Mammary epithelial cell (primary cell): ENCODE measurements at regions of chr19 and their contacts with region 1.

Region 1: DNA sequence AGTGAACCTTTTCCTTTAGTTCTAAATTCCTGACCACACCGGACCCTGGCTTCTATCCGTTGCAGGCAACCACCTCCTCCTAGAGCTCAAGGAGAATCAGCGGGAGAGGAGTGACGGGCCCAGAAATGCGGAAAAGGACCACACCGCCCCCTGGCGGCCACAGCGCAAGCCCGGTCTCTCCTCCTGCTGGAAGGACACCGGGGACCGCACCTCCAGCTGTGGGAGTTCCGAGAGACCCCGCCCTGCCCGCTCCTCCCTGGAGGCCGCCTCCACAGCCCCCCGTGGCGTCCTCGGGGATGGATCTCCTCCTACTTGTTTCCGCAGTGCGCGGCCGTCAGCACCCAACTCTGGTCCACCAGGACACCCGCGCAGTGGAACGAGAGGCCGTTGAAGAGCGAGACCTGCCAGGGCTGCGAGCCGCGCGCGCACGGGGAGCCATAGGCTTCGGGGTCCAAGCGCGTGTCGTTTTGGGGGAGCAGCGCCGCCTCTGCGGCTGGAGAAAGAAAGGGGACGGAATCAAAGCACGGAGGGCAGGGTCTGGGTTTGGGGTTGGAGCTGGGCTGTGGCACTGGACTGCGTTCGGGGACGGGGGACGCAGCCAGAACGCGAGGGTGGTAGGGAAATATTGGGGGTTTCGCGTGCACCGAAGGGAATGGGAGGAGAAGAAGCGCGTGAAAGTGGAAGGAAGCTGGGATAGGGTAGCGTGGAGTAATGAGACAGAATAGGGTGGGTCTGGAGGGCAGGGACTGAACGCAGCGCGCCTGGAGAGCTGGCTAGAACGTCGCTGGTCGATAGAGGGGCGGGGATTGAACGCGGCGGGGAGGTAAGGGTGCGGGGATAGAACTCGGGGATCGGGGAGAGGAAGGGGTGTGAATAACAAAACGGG is 2.5 kb downstream of the KLK10 start:
- DNase-seq: peak; percentile 87
- H3K4me3 ChIP-seq: peak overlapping the region; percentile 56 to 74 (median 70)
- H3K27ac ChIP-seq: peak overlapping the region; percentile 77
- H3K4me1 ChIP-seq: peaks cover 26% of the 10 kb centered on the region
- H3K27me3 ChIP-seq: no peaks in the 10 kb centered on the region
- CTCF ChIP-seq: peak; percentile 93 to 99

Region 2: GRCh38 chr19:50724522-50725217 is 292.4 kb before region 1 on chr19:
- CTCF ChIA-PET with region 1: interaction called, 12 read pairs
- dilution Hi-C with region 1: no loop called
- in situ Hi-C with region 1: no loop called
- intact Hi-C with region 1: no loop called
- DNase-seq: peak; percentile 99
- H3K4me3 ChIP-seq: peak overlapping the region; percentile 66 to 82 (median 66)
- H3K27ac ChIP-seq: peak overlapping the region; percentile 39
- H3K4me1 ChIP-seq: peaks cover 25% of the 10 kb centered on the region
- H3K27me3 ChIP-seq: no peaks in the 10 kb centered on the region
- CTCF ChIP-seq: peak; percentile 40 to 64

Region 3: GRCh38 chr19:50882183-50882582 is 134.9 kb before region 1 on chr19:
- CTCF ChIA-PET with region 1: no interaction called
- dilution Hi-C with region 1: no loop called
- in situ Hi-C with region 1: no loop called
- intact Hi-C with region 1: no loop called
- DNase-seq: no peak
- H3K4me3 ChIP-seq: no peak overlapping the region
- H3K27ac ChIP-seq: no peak overlapping the region
- H3K4me1 ChIP-seq: no peaks in the 10 kb centered on the region
- H3K27me3 ChIP-seq: peaks cover 5% of the 10 kb centered on the region
- CTCF ChIP-seq: no peak

Region 4: GRCh38 chr19:50896591-50897190 is 120.3 kb before region 1 on chr19:
- CTCF ChIA-PET with region 1: interaction called, 4 read pairs
- dilution Hi-C with region 1: no loop called
- in situ Hi-C with region 1: no loop called
- intact Hi-C with region 1: loop called (anchors 2 kb)
- DNase-seq: peak; percentile 98
- H3K4me3 ChIP-seq: no peak overlapping the region
- H3K27ac ChIP-seq: peak overlapping the region; percentile 55
- H3K4me1 ChIP-seq: peaks cover 18% of the 10 kb centered on the region
- H3K27me3 ChIP-seq: peaks cover 2% of the 10 kb centered on the region
- CTCF ChIP-seq: no peak

Region 5: GRCh38 chr19:50933640-50934039 is 83.4 kb before region 1 on chr19:
- CTCF ChIA-PET with region 1: interaction called, 16 read pairs
- dilution Hi-C with region 1: loop called (anchors 5 kb)
- in situ Hi-C with region 1: loop called (anchors 5 kb)
- intact Hi-C with region 1: loop called (anchors 1 kb)
- DNase-seq: peak; percentile 93
- H3K4me3 ChIP-seq: no peak overlapping the region
- H3K27ac ChIP-seq: peak overlapping the region; percentile 97
- H3K4me1 ChIP-seq: peaks cover 33% of the 10 kb centered on the region
- H3K27me3 ChIP-seq: no peaks in the 10 kb centered on the region
- CTCF ChIP-seq: no peak

Region 6: GRCh38 chr19:50969411-50969756 is 47.7 kb before region 1 on chr19 and contains the start of gene KLK6:
- CTCF ChIA-PET with region 1: no interaction called
- dilution Hi-C with region 1: no loop called
- in situ Hi-C with region 1: no loop called
- intact Hi-C with region 1: loop called (anchors 1 kb)
- DNase-seq: peak; percentile 95
- H3K4me3 ChIP-seq: no peak within 1 kb of the TSS
- H3K27ac ChIP-seq: peak within 1 kb of the TSS; percentile 83
- H3K4me1 ChIP-seq: peaks cover 25% of the 10 kb centered on the region
- H3K27me3 ChIP-seq: no peaks in the 10 kb centered on the region
- CTCF ChIP-seq: no peak
- total RNA-seq, gene KLK6: 12.7 to 175 TPM

Region 7: GRCh38 chr19:51047031-51047335 is 29.9 kb after region 1 on chr19:
- CTCF ChIA-PET with region 1: interaction called, 10 read pairs
- dilution Hi-C with region 1: no loop called
- in situ Hi-C with region 1: no loop called
- intact Hi-C with region 1: no loop called
- DNase-seq: no peak
- H3K4me3 ChIP-seq: no peak overlapping the region
- H3K27ac ChIP-seq: no peak overlapping the region
- H3K4me1 ChIP-seq: no peaks in the 10 kb centered on the region
- H3K27me3 ChIP-seq: no peaks in the 10 kb centered on the region
- CTCF ChIP-seq: no peak

Region 8: DNA sequence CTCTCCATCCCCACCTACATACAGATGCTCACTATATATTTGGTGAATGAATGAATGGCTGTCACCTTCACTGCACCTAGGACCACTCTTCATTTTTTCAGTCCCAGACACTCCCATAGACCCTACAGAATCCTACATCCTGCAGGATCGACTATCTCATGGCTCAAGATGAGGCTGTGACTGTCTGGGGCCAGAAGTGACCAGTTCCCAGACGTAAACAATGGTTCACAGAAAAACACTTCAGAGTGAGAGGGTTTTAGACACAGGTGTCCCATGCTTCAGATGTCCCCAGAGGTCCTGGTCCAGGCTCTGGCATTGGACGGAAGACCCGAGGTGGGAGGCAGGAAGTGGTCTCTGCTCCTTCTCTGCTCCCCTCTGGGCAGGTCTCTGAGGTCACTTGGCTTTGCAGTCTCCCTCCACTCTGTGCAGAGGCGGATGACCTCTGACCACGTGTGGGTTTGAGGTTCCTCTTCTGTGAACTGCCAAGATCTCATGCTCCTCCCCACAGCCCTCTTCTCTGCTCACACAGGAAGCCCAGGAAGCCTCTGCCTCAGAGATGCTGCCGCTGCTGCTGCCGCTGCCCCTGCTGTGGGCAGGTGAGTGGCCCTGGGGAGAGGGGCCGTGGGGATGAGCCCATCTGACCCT is 149.9 kb after region 1 on chr19:
- CTCF ChIA-PET with region 1: interaction called, 10 read pairs
- dilution Hi-C with region 1: no loop called
- in situ Hi-C with region 1: no loop called
- intact Hi-C with region 1: loop called (anchors 1 kb)
- DNase-seq: no peak
- H3K4me3 ChIP-seq: no peak overlapping the region
- H3K27ac ChIP-seq: no peak overlapping the region
- H3K4me1 ChIP-seq: no peaks in the 10 kb centered on the region
- H3K27me3 ChIP-seq: no peaks in the 10 kb centered on the region
- CTCF ChIP-seq: no peak